Activated CD4-positive, alpha-beta T cell treated with anti-CD3 and anti-CD28 coated beads, Interleukin-2, amount 10 ng/mL, durations not matched to agents 7 days and 5 days (primary cell): ENCODE measurements at regions of chr1 and their contacts with region 1.

Region 1: DNA sequence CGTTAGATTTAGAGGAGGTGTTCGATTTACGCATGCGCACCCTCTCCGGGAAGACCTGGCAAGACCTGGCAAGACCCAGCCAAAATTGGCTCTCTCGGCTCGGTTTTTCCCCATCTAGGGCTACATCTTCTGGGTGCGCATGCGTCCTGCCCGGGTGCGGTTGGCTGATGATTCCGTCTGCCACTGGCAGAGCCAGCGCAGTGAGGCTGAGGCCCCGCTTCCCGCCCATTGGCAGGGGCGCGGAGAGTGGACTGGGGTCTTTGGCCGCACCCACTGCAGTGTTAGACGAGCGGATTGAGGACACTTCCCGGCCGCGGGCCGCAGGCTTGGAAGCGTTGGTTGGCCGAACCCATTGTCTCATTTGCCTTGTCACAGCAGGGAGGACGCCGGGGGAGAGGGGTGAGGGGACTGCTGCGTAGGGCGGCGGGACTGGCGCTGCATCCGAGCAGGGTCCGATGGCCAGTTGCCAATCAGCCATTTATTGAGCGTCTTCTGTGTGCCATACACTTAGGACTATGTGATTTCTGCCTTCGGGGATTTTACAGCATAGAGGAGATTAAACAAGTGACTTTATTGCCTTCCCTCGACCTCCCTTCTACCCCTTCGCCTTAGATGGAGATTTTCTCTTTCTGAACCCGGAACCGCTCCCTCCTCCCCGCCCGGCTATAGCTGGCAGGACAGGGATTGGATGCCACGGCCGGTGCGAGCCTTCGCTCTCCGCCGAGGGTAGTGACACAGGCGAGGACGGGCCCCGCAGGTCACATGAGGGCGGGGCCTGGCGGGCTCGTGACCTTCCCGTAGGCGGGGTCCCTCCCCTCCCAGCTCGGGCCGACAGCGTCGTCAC is 43.7 kb downstream of the MEF2D start:
- DNase-seq: peak; percentile 96
- H3K4me3 Mint-ChIP-seq: peak overlapping the region; percentile 82
- H3K27ac Mint-ChIP-seq: peak overlapping the region; percentile 95
- H3K4me1 Mint-ChIP-seq: peaks cover 18% of the 10 kb centered on the region
- H3K27me3 Mint-ChIP-seq: peaks cover 6% of the 10 kb centered on the region

Region 2: GRCh38 chr1:156425943-156426342 is 30.9 kb before region 1 on chr1:
- CTCF ChIA-PET with region 1: no interaction called
- POLR2A ChIA-PET with region 1: no interaction called
- DNase-seq: no peak
- H3K4me3 Mint-ChIP-seq: no peak overlapping the region
- H3K27ac Mint-ChIP-seq: no peak overlapping the region
- H3K4me1 Mint-ChIP-seq: peaks cover 6% of the 10 kb centered on the region
- H3K27me3 Mint-ChIP-seq: peaks cover 95% of the 10 kb centered on the region

Region 3: DNA sequence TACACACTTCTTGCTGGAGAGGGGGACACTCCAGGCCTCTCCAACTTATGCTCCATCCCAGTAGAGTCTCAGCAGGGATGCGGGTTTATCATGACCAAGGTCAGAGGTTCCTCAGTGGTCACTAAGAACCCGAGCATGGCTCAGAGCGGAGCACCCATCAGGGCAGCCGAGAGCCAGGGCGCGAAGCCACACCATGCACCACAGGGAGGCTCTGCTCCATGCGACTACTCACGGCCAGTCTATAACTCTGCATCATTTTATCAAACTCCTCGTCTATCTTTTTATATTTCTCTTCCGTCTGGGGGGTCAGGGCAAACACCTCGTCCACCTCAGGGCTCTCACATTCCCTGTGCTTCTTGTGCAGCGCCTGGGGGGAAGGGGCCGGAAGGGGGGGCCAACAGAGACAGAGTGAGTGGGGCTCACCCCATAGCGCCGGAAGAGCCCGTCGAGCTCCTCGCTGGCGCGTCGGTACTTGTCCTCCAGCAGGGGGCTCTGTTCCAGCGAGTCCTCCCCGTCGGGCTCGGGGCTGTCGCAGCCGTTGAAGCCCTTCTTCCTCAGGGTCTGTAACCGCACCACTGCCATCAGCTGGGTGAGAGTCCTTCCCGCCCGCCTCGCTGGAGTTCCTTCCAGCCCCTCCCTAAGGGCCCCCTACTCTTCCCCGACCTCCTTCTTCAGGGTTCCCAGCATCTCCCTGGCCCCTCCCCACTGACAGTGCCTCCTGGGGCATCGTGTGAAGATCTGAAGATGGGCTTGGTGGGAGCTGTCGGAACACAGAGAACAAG is 23.8 kb after region 1 on chr1:
- CTCF ChIA-PET with region 1: interaction called, 20 read pairs
- POLR2A ChIA-PET with region 1: no interaction called
- DNase-seq: peak; percentile 85
- H3K4me3 Mint-ChIP-seq: no peak overlapping the region
- H3K27ac Mint-ChIP-seq: peak overlapping the region; percentile 22
- H3K4me1 Mint-ChIP-seq: peaks cover 35% of the 10 kb centered on the region
- H3K27me3 Mint-ChIP-seq: no peaks in the 10 kb centered on the region

Region 4: DNA sequence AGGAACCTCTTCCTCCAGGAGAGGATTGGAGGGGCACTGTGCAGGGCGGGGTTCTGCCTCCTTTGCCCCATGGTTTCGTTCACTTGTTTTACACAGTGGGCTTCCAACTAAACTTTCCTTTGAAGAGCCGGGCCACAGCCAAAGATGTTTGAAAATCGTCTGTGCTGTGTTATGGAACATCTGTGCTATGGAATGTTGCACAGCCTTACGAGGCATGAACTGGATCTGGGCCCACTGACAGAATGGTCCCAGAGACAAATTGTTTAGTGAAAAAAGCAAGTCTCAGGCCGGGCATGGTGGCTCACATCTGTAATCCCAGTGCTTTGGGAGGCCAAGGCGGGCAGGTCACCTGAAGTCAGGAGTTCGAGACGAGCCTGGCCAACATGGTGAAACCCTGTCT is 56.3 kb after region 1 on chr1:
- CTCF ChIA-PET with region 1: no interaction called
- POLR2A ChIA-PET with region 1: no interaction called
- DNase-seq: no peak
- H3K4me3 Mint-ChIP-seq: no peak overlapping the region
- H3K27ac Mint-ChIP-seq: no peak overlapping the region
- H3K4me1 Mint-ChIP-seq: peaks cover 27% of the 10 kb centered on the region
- H3K27me3 Mint-ChIP-seq: no peaks in the 10 kb centered on the region

Region 5: DNA sequence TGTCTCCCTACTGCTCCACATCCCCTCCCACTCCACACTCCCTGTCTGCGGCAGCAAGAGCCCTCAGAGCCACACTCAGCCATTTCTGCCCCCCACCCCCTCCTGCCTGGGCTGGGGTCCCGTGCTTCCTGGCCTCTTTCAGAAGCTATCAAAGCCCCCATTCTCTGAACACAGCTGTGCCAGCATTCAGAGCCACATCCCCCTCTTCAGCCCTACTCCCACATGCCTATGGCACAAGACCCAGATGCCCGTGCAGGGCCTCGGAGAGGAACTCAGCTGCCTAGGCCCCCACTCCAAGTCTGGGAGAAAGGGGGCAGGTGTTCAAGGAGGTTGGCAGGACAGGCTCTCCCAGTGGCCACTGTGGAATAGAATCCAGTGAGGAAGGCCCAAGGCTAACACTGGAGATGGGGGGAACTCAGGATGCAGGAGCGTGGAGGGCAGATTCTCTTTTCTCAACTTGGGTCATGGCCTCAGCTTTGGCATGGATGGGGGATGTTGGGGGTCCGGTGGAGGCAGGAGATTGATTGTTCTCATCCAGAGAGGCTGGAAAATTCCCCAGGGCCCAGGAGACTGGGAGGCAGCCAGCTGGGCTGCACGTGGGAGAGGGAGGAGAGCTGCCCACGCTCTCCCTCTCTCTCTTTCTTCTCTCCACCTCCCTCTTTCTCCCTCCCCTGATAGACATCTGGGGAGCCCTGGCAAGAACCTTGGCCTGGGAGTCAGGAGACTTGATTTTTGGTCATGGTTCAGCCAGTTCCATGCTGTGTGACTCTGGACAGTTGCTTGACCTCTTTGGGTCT is 181.5 kb after region 1 on chr1:
- CTCF ChIA-PET with region 1: no interaction called
- POLR2A ChIA-PET with region 1: no interaction called
- DNase-seq: no peak
- H3K4me3 Mint-ChIP-seq: no peak overlapping the region
- H3K27ac Mint-ChIP-seq: no peak overlapping the region
- H3K4me1 Mint-ChIP-seq: peaks cover 20% of the 10 kb centered on the region
- H3K27me3 Mint-ChIP-seq: peaks cover 75% of the 10 kb centered on the region